ENCODE measurements at regions of chr18 and their contacts with region 1.

Region 1: DNA sequence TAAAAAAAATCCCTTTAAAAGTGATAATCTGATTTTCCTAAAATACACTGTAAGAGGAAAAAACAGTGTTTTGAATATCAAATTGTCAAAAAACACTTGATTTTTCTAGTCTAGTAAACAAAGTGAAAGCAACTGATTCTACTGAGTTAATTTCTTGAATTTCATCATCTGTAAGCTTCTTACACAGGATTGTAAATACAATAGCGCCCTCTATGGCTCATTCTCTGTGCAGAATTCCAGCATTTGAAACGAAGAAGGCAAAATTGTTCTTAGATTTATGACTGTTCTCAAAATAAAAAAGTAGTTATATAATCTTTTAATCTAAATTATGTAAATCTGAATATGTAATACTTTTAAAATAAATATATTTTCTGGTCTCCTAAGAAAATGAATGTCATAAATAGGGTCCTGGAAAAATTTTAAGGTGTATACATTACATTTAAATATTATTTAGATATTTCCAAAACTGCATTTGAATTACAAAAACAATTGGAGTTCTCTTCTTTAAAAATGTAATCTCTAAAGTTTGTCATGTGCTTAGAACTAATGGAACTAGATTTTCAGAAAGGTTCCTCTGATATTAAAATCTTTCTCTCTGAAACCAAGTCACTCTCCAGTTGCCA is 176.9 kb upstream of the MC4R start:
- DNase-seq: no peak
- H3K4me3 ChIP-seq: no peak overlapping the region
- H3K27ac ChIP-seq: no peak overlapping the region
- H3K4me1 ChIP-seq: no peaks in the 10 kb centered on the region
- H3K27me3 ChIP-seq: peaks cover 0 to 10% (median 0%) of the 10 kb centered on the region in 7 donors
- CTCF ChIP-seq: peak in 9 of 11 experiments; percentile 21 to 69 (median 61)
- POLR2A ChIP-seq: no peak

Region 2: GRCh38 chr18:59459369-59460079 is 1089.9 kb before region 1 on chr18:
- intact Hi-C with region 1: loop called (anchors 10 kb)
- DNase-seq: no peak
- H3K4me3 ChIP-seq: no peak overlapping the region
- H3K27ac ChIP-seq: no peak overlapping the region
- H3K4me1 ChIP-seq: no peaks in the 10 kb centered on the region
- H3K27me3 ChIP-seq: peaks cover 0 to 32% (median 0%) of the 10 kb centered on the region in 7 donors
- CTCF ChIP-seq: peak in 7 of 11 experiments; percentile 19 to 58 (median 49)
- POLR2A ChIP-seq: no peak

Region 3: DNA sequence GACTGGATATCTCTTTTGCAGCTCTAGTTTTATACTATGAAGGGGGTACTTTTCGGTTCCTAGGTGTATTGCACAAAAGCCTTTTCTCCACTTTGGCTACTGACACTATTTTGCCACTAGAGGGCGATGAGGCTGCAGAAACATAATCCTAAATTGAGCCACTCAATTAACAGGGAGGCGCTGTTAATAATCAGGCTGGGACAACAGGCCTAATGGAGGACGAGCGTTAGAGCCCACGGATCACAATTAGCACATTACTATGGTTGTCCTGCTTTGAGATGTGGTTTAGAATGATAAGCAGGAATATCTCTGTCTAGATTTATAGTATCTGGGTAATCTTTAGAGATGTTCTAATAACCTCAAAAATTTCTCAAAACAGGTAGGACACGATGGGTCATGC is 711.9 kb before region 1 on chr18:
- intact Hi-C with region 1: loop called (anchors 10 kb)
- DNase-seq: no peak
- H3K4me3 ChIP-seq: no peak overlapping the region
- H3K27ac ChIP-seq: no peak overlapping the region
- H3K4me1 ChIP-seq: peaks cover 0 to 5% (median 0%) of the 10 kb centered on the region in 6 donors
- H3K27me3 ChIP-seq: no peaks in the 10 kb centered on the region
- CTCF ChIP-seq: peak; percentile 50 to 86 (median 80)
- POLR2A ChIP-seq: no peak

Region 4: GRCh38 chr18:59994357-59994756 is 555.1 kb before region 1 on chr18:
- intact Hi-C with region 1: loop called (anchors 5 kb)
- DNase-seq: no peak
- H3K4me3 ChIP-seq: no peak overlapping the region
- H3K27ac ChIP-seq: no peak overlapping the region
- H3K4me1 ChIP-seq: no peaks in the 10 kb centered on the region
- H3K27me3 ChIP-seq: peaks cover 0 to 27% (median 0%) of the 10 kb centered on the region in 7 donors
- CTCF ChIP-seq: no peak
- POLR2A ChIP-seq: no peak